ENCODE measurements at regions of chr11 and their contacts with region 1.

Region 1: GRCh38 chr11:4072668-4073285 is 21.8 kb upstream of the RRM1 start:
- DNase-seq: peak; percentile 48
- H3K4me3 Mint-ChIP-seq: no peak overlapping the region
- H3K27ac Mint-ChIP-seq: peak overlapping the region; percentile 65
- H3K4me1 Mint-ChIP-seq: peaks cover 39% of the 10 kb centered on the region
- H3K27me3 Mint-ChIP-seq: no peaks in the 10 kb centered on the region

Region 2: GRCh38 chr11:3781423-3781822 is 291.4 kb before region 1 on chr11:
- CTCF ChIA-PET with region 1: interaction called, 12 read pairs
- POLR2A ChIA-PET with region 1: no interaction called
- intact Hi-C with region 1: no loop called
- DNase-seq: no peak
- H3K4me3 Mint-ChIP-seq: no peak overlapping the region
- H3K27ac Mint-ChIP-seq: peak overlapping the region; percentile 33
- H3K4me1 Mint-ChIP-seq: peaks cover 54% of the 10 kb centered on the region
- H3K27me3 Mint-ChIP-seq: no peaks in the 10 kb centered on the region

Region 3: GRCh38 chr11:3824714-3825472 is 247.9 kb before region 1 on chr11:
- CTCF ChIA-PET with region 1: interaction called, 26 read pairs
- POLR2A ChIA-PET with region 1: interaction called, 3 read pairs
- intact Hi-C with region 1: no loop called
- DNase-seq: peak; percentile 88
- H3K4me3 Mint-ChIP-seq: no peak overlapping the region
- H3K27ac Mint-ChIP-seq: peak overlapping the region; percentile 63
- H3K4me1 Mint-ChIP-seq: peaks cover 33% of the 10 kb centered on the region
- H3K27me3 Mint-ChIP-seq: no peaks in the 10 kb centered on the region

Region 4: GRCh38 chr11:3854977-3855807 is 217.6 kb before region 1 on chr11 and contains the start of gene STIM1:
- CTCF ChIA-PET with region 1: interaction called, 756 read pairs
- POLR2A ChIA-PET with region 1: interaction called, 15 read pairs
- intact Hi-C with region 1: loop called (anchors 1 kb)
- DNase-seq: peak; percentile 99
- H3K4me3 Mint-ChIP-seq: peak within 1 kb of the TSS; percentile 85
- H3K27ac Mint-ChIP-seq: peak within 1 kb of the TSS; percentile 99
- H3K4me1 Mint-ChIP-seq: peaks cover 53% of the 10 kb centered on the region
- H3K27me3 Mint-ChIP-seq: no peaks in the 10 kb centered on the region
- total RNA-seq, gene STIM1: 55.9 to 61.1 TPM

Region 5: GRCh38 chr11:3929649-3930048 is 143.1 kb before region 1 on chr11:
- CTCF ChIA-PET with region 1: interaction called, 21 read pairs
- POLR2A ChIA-PET with region 1: no interaction called
- intact Hi-C with region 1: no loop called
- DNase-seq: no peak
- H3K4me3 Mint-ChIP-seq: no peak overlapping the region
- H3K27ac Mint-ChIP-seq: no peak overlapping the region
- H3K4me1 Mint-ChIP-seq: peaks cover 29% of the 10 kb centered on the region
- H3K27me3 Mint-ChIP-seq: no peaks in the 10 kb centered on the region

Region 6: GRCh38 chr11:3984896-3985295 is 87.9 kb before region 1 on chr11:
- CTCF ChIA-PET with region 1: interaction called, 12 read pairs
- POLR2A ChIA-PET with region 1: no interaction called
- intact Hi-C with region 1: no loop called
- DNase-seq: peak; percentile 69
- H3K4me3 Mint-ChIP-seq: no peak overlapping the region
- H3K27ac Mint-ChIP-seq: peak overlapping the region; percentile 18
- H3K4me1 Mint-ChIP-seq: peaks cover 73% of the 10 kb centered on the region
- H3K27me3 Mint-ChIP-seq: no peaks in the 10 kb centered on the region

Region 7: GRCh38 chr11:4060182-4060923 is 12.4 kb before region 1 on chr11:
- CTCF ChIA-PET with region 1: interaction called, 51 read pairs
- POLR2A ChIA-PET with region 1: interaction called, 7 read pairs
- intact Hi-C with region 1: loop called (anchors 1 kb)
- DNase-seq: no peak
- H3K4me3 Mint-ChIP-seq: no peak overlapping the region
- H3K27ac Mint-ChIP-seq: no peak overlapping the region
- H3K4me1 Mint-ChIP-seq: peaks cover 44% of the 10 kb centered on the region
- H3K27me3 Mint-ChIP-seq: no peaks in the 10 kb centered on the region

Region 8: DNA sequence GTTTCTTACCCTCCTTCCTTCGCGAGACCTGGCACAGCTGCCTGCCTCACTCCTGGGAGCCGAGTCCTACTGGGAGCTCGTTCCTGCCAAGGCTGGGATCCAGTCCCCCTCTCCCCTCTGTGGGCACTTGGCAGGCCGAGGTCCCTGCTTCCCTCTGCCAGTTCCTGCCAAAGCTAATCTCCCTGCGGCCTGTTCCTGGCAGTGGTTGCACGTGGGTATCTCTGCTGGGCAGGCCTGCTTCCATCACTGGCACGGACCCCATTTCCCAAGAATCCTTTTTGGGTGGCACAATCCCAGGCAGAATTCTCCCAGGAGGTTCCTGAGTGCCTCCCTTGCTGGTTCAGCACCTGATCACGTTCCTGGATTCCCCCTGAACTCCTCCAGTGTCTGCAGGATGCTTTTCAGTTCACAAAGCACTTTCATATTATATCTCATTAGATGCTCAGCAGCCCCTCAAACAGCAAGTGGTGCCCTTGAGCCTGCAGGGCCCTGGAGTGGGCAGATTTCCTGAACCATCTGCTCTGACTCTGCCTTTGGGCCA is 118.3 kb after region 1 on chr11:
- CTCF ChIA-PET with region 1: no interaction called
- POLR2A ChIA-PET with region 1: no interaction called
- intact Hi-C with region 1: no loop called
- DNase-seq: no peak
- H3K4me3 Mint-ChIP-seq: no peak overlapping the region
- H3K27ac Mint-ChIP-seq: no peak overlapping the region
- H3K4me1 Mint-ChIP-seq: peaks cover 2% of the 10 kb centered on the region
- H3K27me3 Mint-ChIP-seq: peaks cover 3% of the 10 kb centered on the region

Measured in activated CD4-positive, alpha-beta memory T cell treated with anti-CD3 and anti-CD28 coated beads for 36 hours (primary cell).